Transverse colon (tissue), 4 donors: ENCODE measurements at regions of chr2 and their contacts with region 1.

Region 1: DNA sequence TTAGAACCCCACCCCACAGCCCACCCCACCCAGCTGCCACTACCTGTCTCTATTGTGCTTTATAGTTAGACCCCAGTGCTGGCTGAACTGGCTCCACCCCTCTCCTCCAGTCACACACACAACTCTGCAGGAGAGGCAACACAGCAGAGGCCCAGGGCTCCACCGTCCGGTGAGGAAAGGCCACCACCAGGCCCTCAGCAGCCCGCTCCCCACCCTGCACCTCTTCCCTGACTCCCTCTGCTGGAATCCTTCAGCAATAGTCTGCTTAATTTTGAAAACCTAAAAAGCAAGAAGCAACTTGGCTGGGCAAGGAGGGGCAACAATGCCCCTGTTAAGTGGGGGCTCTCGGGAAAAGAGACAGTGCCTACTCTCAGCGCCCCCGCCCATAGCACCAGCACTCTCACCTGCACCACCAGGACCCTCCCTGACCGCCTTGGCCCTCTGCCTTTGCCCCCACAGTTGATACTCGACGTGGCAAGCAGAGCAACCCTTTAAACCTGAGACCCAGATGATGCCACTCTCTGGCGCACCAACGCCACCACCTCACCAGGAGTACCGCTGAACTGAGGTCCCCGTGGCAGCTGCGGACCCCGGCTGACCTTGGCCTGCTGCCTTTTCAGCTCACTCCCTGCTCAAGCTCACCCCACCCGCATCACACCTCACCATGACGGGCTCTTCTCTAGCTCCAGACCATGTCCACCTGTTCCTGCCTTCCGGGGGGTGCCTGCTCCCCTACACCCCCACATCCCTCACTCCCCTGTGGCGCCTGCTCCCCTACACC is 45.7 kb downstream of the NDUFA10 start:
- DNase-seq: no peak
- H3K4me3 ChIP-seq: no peak overlapping the region
- H3K27ac ChIP-seq: no peak overlapping the region
- H3K4me1 ChIP-seq: no peaks in the 10 kb centered on the region
- H3K27me3 ChIP-seq: no peaks in the 10 kb centered on the region
- CTCF ChIP-seq: no peak
- EP300 ChIP-seq: no peak
- POLR2A ChIP-seq: no peak

Region 2: DNA sequence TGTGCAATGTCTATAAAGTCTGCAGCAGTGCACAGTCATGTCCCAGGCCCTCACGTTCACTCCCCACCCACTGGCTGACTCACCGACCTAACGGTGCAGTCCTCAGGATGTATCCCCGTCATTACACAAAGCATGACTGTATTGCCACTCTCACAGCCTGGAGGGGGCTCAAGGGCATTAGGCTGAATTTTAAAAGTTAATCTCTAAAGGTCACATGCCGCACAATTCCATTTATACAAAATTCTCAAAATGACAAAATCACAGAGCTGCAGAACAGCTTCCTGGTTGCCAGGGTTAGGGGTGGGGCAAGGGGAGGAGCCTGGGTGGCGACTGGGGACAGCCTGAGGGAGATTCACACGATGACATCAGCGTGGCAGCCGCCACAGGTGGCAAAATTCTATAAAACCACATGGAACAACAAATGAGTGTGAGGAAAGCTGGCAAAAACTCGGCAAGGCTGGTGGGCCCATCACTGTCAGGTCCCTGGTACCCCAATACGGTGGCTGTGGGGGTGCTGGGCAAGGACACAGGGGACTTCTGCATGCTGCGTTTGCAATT is 51.9 kb before region 1 on chr2:
- in situ Hi-C with region 1: no loop called
- intact Hi-C with region 1: loop called (anchors 5 kb)
- DNase-seq: no peak
- H3K4me3 ChIP-seq: no peak overlapping the region
- H3K27ac ChIP-seq: no peak overlapping the region
- H3K4me1 ChIP-seq: no peaks in the 10 kb centered on the region
- H3K27me3 ChIP-seq: no peaks in the 10 kb centered on the region
- CTCF ChIP-seq: no peak
- EP300 ChIP-seq: no peak
- POLR2A ChIP-seq: no peak

Region 3: GRCh38 chr2:240032406-240033329 is 53.2 kb after region 1 on chr2:
- in situ Hi-C with region 1: no loop called
- intact Hi-C with region 1: no loop called
- DNase-seq: no peak
- H3K4me3 ChIP-seq: no peak overlapping the region
- H3K27ac ChIP-seq: no peak overlapping the region
- H3K4me1 ChIP-seq: no peaks in the 10 kb centered on the region
- H3K27me3 ChIP-seq: peaks cover 20% of the 10 kb centered on the region
- CTCF ChIP-seq: no peak
- EP300 ChIP-seq: no peak
- POLR2A ChIP-seq: no peak

Region 4: GRCh38 chr2:240155048-240155744 is 175.8 kb after region 1 on chr2:
- in situ Hi-C with region 1: no loop called
- intact Hi-C with region 1: no loop called
- DNase-seq: no peak
- H3K4me3 ChIP-seq: no peak overlapping the region
- H3K27ac ChIP-seq: no peak overlapping the region
- H3K4me1 ChIP-seq: no peaks in the 10 kb centered on the region
- H3K27me3 ChIP-seq: no peaks in the 10 kb centered on the region
- CTCF ChIP-seq: no peak
- EP300 ChIP-seq: no peak
- POLR2A ChIP-seq: no peak